Breast epithelium (tissue), 4 donors: ENCODE measurements at regions of chr6 and their contacts with region 1.

Region 1: DNA sequence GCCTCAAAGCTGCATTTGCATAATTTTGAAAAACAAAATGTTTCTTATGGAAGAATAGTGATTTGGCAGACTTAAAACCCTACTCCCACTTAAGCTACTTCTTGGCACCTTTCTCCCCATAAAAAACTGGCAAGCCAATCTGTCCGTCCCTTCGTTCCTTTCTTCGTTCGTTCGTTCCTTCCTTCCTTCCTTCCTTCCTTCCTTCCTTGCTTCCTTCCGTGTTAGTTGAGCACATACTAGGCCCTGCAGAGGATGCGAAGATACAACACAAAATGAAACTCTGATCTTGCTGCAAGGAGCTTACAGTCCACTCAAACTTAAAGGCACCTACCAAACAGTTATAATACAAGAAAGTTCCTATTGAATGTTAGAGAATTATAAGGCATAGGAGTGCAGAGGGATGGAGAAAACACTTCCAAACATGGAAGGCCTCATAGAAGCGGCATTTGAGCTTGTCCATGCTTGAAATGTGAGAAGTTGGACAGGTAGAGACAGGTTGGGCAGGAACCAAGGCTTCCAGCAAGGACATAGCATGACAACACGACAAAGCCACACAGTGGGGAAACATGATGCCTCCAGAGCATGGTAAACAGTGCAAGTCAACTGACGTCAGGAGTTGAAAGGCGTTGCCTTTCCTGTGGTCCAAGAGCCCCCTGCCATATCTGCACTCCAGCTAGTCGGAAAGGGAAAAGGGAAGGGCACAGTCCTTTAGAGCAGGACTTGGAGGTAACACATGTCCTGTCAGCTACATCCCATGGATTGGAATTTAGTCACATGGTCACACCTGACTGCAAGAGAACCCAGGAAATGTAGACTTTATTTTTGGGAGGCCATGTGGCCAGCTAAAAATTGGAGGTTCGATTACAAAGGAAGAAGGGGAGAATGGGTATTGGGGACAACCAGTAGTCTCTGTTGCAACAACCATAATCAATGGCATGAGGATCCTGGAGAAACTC is 7.0 kb downstream of the PNPLA1 start:
- DNase-seq: no peak
- H3K4me3 ChIP-seq: no peak overlapping the region
- H3K27ac ChIP-seq: no peak overlapping the region
- H3K4me1 ChIP-seq: no peaks in the 10 kb centered on the region
- H3K27me3 ChIP-seq: no peaks in the 10 kb centered on the region
- CTCF ChIP-seq: no peak
- POLR2A ChIP-seq: no peak

Region 2: GRCh38 chr6:36290661-36291620 is 14.1 kb after region 1 on chr6:
- intact Hi-C with region 1: loop called (anchors 1 kb)
- DNase-seq: no peak
- H3K4me3 ChIP-seq: no peak overlapping the region
- H3K27ac ChIP-seq: no peak overlapping the region
- H3K4me1 ChIP-seq: no peaks in the 10 kb centered on the region
- H3K27me3 ChIP-seq: peaks cover 0 to 10% of the 10 kb centered on the region in 2 donors
- CTCF ChIP-seq: no peak
- POLR2A ChIP-seq: no peak